Activated CD8-positive, alpha-beta T cell treated with anti-CD3 and anti-CD28 coated beads, Interleukin-2, amount 10 ng/mL, durations not matched to agents 7 days and 5 days (primary cell): ENCODE measurements at regions of chr3 and their contacts with region 1.

Region 1: DNA sequence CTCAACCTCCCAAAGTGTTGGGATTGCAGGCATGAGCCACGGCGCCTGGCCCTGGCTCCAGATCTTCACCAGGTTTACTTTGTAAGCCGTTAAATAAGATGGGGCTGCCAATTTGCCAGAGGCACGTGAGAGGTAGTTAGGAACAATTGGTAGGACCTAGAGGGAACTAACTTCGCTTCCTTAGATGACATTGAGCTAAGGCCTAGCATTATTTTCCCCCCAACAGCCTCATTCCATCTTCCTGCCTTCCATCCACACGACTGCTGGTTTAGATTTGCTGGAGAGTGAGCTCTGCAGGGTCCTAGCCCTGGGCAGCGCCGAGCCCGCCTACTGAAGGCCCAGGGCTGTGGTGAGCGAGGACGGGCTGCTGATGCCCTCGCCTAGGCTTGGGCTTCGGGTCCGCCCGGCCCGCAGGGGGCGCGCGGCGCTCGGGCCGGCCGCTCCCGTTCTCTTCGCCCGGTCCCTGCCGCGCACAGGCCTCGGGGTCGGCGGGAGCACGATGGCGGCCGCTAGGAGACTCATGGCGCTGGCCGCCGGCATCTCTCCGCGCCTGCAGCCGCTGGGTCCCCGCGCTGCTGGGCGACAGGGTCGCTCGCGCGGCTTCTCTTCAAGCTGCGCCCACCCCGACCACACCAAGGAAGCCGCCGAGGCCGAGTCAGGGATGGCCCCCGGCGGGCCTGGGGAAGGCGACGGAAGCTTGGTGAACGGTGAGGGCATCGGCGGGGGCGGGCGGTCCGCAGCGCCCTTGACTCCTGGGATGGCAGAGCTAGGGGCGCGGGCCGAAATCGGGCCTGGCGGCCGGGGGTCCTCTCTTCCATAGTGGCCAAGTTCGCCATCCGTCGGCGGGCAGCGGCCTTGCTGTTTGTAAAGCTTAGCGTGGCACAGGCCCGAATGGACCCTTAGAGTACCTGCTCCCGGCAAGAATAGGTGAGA is 21.9 kb downstream of the DHX30 start:
- DNase-seq: peak; percentile 80
- ATAC-seq: peak; percentile 100
- H3K4me3 Mint-ChIP-seq: peak overlapping the region; percentile 89
- H3K27ac Mint-ChIP-seq: peak overlapping the region; percentile 81
- H3K4me1 Mint-ChIP-seq: peaks cover 34% of the 10 kb centered on the region
- H3K27me3 Mint-ChIP-seq: no peaks in the 10 kb centered on the region

Region 2: GRCh38 chr3:47522082-47522987 is 302.5 kb before region 1 on chr3:
- CTCF ChIA-PET with region 1: interaction called, 19 read pairs
- POLR2A ChIA-PET with region 1: no interaction called
- DNase-seq: peak; percentile 88
- ATAC-seq: peak; percentile 93
- H3K4me3 Mint-ChIP-seq: no peak overlapping the region
- H3K27ac Mint-ChIP-seq: peak overlapping the region; percentile 14
- H3K4me1 Mint-ChIP-seq: peaks cover 14% of the 10 kb centered on the region
- H3K27me3 Mint-ChIP-seq: no peaks in the 10 kb centered on the region

Region 3: GRCh38 chr3:47705391-47705790 is 119.4 kb before region 1 on chr3:
- CTCF ChIA-PET with region 1: no interaction called
- POLR2A ChIA-PET with region 1: no interaction called
- DNase-seq: no peak
- ATAC-seq: no peak
- H3K4me3 Mint-ChIP-seq: no peak overlapping the region
- H3K27ac Mint-ChIP-seq: no peak overlapping the region
- H3K4me1 Mint-ChIP-seq: no peaks in the 10 kb centered on the region
- H3K27me3 Mint-ChIP-seq: no peaks in the 10 kb centered on the region

Region 4: DNA sequence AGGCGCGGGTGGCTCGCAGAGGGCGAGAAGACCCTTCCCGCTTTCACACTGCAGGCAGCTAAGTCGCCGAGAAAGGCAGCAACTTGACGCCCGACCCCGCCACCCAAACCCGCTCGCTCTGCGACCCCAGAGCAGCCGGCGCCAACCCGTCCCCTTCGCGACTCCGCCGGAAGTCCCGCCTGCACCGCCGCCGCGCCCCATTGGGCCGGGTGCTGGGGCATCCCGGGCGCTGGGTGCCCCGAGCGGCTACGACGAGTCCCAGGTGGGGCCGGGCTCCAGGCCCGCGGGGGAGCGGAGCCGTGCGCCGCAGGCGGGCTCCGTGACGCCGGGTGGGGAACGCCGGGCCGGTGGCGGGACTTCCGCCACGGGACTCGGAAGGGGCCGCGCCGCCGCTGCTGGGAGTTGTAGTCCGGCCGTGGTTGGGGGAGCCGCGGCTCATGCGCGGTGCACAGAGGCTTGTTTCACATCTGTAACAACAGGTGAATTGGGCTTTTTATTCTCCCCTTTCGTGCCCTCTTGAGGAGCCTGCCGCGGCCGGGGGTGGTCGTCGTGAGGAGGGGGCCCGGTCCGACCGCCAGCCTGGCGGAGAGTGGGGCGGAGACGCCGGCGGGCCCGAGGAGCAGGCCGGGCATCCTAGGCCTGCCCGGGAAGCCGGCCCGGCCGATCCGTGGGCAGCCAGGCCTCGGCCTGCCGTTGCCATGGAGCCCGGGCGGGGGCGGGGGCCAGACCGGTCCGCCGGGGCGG is 21.9 kb before region 1 on chr3 and contains the start of gene DHX30:
- CTCF ChIA-PET with region 1: interaction called, 22 read pairs
- POLR2A ChIA-PET with region 1: interaction called, 4 read pairs
- DNase-seq: peak; percentile 87
- ATAC-seq: peak; percentile 94
- H3K4me3 Mint-ChIP-seq: peak within 1 kb of the TSS; percentile 94
- H3K27ac Mint-ChIP-seq: peak within 1 kb of the TSS; percentile 93
- H3K4me1 Mint-ChIP-seq: peaks cover 24% of the 10 kb centered on the region
- H3K27me3 Mint-ChIP-seq: no peaks in the 10 kb centered on the region
- total RNA-seq, gene DHX30: 72.8 to 75.7 TPM

Region 5: GRCh38 chr3:47813551-47814177 is 11.1 kb before region 1 on chr3:
- CTCF ChIA-PET with region 1: interaction called, 45 read pairs
- POLR2A ChIA-PET with region 1: no interaction called
- DNase-seq: no peak
- ATAC-seq: no peak
- H3K4me3 Mint-ChIP-seq: no peak overlapping the region
- H3K27ac Mint-ChIP-seq: no peak overlapping the region
- H3K4me1 Mint-ChIP-seq: no peaks in the 10 kb centered on the region
- H3K27me3 Mint-ChIP-seq: no peaks in the 10 kb centered on the region

Region 6: GRCh38 chr3:47836986-47837385 is 12.2 kb after region 1 on chr3:
- CTCF ChIA-PET with region 1: interaction called, 38 read pairs
- POLR2A ChIA-PET with region 1: interaction called, 5 read pairs
- DNase-seq: no peak
- ATAC-seq: no peak
- H3K4me3 Mint-ChIP-seq: no peak overlapping the region
- H3K27ac Mint-ChIP-seq: no peak overlapping the region
- H3K4me1 Mint-ChIP-seq: no peaks in the 10 kb centered on the region
- H3K27me3 Mint-ChIP-seq: no peaks in the 10 kb centered on the region